ENCODE measurements at regions of chr1 and their contacts with region 1.

Region 1: DNA sequence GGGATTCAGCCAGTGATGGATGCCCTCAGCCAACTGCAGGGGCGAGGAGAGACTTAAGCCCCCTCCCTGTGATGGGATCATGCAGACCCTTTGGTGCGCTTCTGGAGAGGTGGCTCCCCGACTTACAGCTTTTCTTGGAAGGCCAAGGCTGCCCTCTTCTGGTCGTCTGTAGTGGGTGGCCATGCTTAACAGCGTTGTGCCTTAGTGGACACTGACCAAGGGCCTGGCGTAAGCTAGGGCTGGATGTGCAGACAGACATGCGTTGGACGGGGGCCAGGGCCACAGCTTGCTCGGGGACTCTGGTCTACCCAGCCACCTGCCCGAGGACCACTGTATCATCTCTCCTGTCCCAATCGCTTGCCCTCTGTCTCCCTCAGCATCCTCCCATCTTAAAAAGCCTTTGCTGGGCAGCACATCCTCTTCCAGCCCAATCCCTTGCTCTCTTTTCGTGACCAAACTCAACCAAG is 5.5 kb downstream of the AZIN2 start:
- DNase-seq: peak; percentile 79
- H3K4me3 ChIP-seq: no peak overlapping the region
- H3K27ac ChIP-seq: no peak overlapping the region
- H3K4me1 ChIP-seq: peaks cover 3% of the 10 kb centered on the region
- H3K27me3 ChIP-seq: no peaks in the 10 kb centered on the region
- CTCF ChIP-seq: peak; percentile 72

Region 2: GRCh38 chr1:32876341-32877210 is 209.8 kb before region 1 on chr1:
- intact Hi-C with region 1: loop called (anchors 5 kb)
- DNase-seq: peak; percentile 68
- H3K4me3 ChIP-seq: no peak overlapping the region
- H3K27ac ChIP-seq: no peak overlapping the region
- H3K4me1 ChIP-seq: no peaks in the 10 kb centered on the region
- H3K27me3 ChIP-seq: peaks cover 9% of the 10 kb centered on the region
- CTCF ChIP-seq: peak; percentile 91

Region 3: DNA sequence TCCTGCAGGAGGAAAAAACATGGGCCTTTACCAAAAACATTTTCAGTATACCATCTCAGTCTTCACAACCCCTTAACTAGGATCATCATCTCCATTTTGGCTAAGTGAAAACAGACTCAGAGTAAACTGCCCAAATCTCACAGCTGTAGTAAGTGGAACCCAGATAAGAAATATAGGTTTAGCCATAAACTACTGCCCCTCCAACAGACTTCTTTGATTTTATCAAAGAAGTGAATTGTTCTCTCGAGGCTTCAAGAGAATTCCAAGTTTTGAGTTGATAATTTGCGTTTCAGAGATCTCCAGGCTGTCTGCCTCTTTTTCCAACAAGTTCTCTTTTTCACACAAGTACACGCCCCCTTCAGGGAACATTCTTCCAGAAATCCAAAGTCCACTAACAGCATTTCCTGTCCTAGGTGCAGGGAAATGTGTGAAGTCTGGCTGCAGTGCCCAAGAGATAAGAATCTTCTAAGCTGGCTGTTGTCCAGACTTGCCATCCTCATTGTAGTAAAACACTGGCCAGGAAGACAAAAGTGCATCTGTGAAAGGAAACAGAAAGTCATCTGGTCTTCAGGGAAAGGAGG is 152.6 kb before region 1 on chr1:
- intact Hi-C with region 1: loop called (anchors 2 kb)
- DNase-seq: peak; percentile 92
- H3K4me3 ChIP-seq: no peak overlapping the region
- H3K27ac ChIP-seq: peak overlapping the region; percentile 94
- H3K4me1 ChIP-seq: peaks cover 15% of the 10 kb centered on the region
- H3K27me3 ChIP-seq: no peaks in the 10 kb centered on the region
- CTCF ChIP-seq: no peak

Region 4: GRCh38 chr1:33181921-33182341 is 95.5 kb after region 1 on chr1 and contains the start of gene TRIM62:
- intact Hi-C with region 1: no loop called
- DNase-seq: peak; percentile 89
- H3K4me3 ChIP-seq: peak within 1 kb of the TSS; percentile 85
- H3K27ac ChIP-seq: peak within 1 kb of the TSS; percentile 63
- H3K4me1 ChIP-seq: peaks cover 4% of the 10 kb centered on the region
- H3K27me3 ChIP-seq: no peaks in the 10 kb centered on the region
- CTCF ChIP-seq: no peak
- total RNA-seq, gene TRIM62: 4.9 to 6.2 TPM

Region 5: GRCh38 chr1:33420870-33421775 is 334.7 kb after region 1 on chr1:
- intact Hi-C with region 1: no loop called
- DNase-seq: no peak
- H3K4me3 ChIP-seq: no peak overlapping the region
- H3K27ac ChIP-seq: peak overlapping the region; percentile 7
- H3K4me1 ChIP-seq: no peaks in the 10 kb centered on the region
- H3K27me3 ChIP-seq: no peaks in the 10 kb centered on the region
- CTCF ChIP-seq: no peak